SK-N-SH (cell line): ENCODE measurements at regions of chr11 and their contacts with region 1.

Region 1: GRCh38 chr11:57800444-57801182 is 39.0 kb downstream of the CTNND1 start:
- DNase-seq: peak; percentile 77
- H3K4me3 ChIP-seq: no peak overlapping the region; a peak in 1 of 4 replicates
- H3K27ac ChIP-seq: peak overlapping the region; percentile 48 to 63; a peak in 3 of 4 replicates
- H3K4me1 ChIP-seq: peaks cover 17 to 26% of the 10 kb centered on the region in 2 experiments
- H3K27me3 ChIP-seq: no peaks in the 10 kb centered on the region
- CTCF ChIP-seq: peak; percentile 87
- EP300 ChIP-seq: no peak
- RAD21 ChIP-seq: peak; percentile 96

Region 2: DNA sequence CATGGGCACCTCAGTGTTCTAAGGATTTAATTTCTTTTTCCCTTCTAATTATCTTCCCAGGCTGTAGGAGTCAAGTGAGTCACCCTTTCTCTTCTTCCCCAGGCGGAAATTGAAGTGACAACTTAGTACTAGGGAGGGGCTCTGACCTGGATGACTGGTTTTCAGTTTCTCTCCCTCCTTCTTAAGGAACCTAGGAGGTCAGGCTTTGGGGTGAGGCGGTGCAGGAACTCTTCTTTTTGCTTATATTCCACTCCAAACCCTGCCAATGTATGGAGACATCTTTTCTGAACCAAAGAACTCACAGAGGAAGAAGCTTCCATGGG is 120.1 kb before region 1 on chr11:
- CTCF ChIA-PET with region 1: interaction called, 12 read pairs
- POLR2A ChIA-PET with region 1: no interaction called
- DNase-seq: no peak
- H3K4me3 ChIP-seq: no peak overlapping the region
- H3K27ac ChIP-seq: no peak overlapping the region
- H3K4me1 ChIP-seq: no peaks in the 10 kb centered on the region; a peak in 1 of 4 replicates
- H3K27me3 ChIP-seq: no peaks in the 10 kb centered on the region
- CTCF ChIP-seq: no peak
- EP300 ChIP-seq: no peak
- RAD21 ChIP-seq: no peak

Region 3: GRCh38 chr11:57741132-57742086 is 59.2 kb before region 1 on chr11 and contains the start of gene SELENOH:
- CTCF ChIA-PET with region 1: interaction called, 142 read pairs
- POLR2A ChIA-PET with region 1: interaction called, 9 read pairs
- DNase-seq: peak; percentile 94
- H3K4me3 ChIP-seq: peak within 1 kb of the TSS; percentile 90 to 98
- H3K27ac ChIP-seq: peak within 1 kb of the TSS; percentile 85 to 88
- H3K4me1 ChIP-seq: peaks cover 0 to 7% of the 10 kb centered on the region in 2 experiments; a peak in 3 of 4 replicates
- H3K27me3 ChIP-seq: no peaks in the 10 kb centered on the region
- CTCF ChIP-seq: no peak
- EP300 ChIP-seq: peak in 1 of 2 experiments; percentile 48; a peak in 2 of 4 replicates
- RAD21 ChIP-seq: no peak
- polyA plus RNA-seq, gene SELENOH: 291 and 333 TPM in 2 replicates

Region 4: GRCh38 chr11:57761301-57762234 is 39.0 kb before region 1 on chr11 and contains the start of gene CTNND1:
- CTCF ChIA-PET with region 1: interaction called, 116 read pairs
- POLR2A ChIA-PET with region 1: interaction called, 4 read pairs
- DNase-seq: peak; percentile 91
- H3K4me3 ChIP-seq: peak within 1 kb of the TSS; percentile 63 to 73
- H3K27ac ChIP-seq: peak within 1 kb of the TSS; percentile 96 to 97
- H3K4me1 ChIP-seq: peaks cover 5 to 17% of the 10 kb centered on the region in 2 experiments; a peak in 3 of 4 replicates
- H3K27me3 ChIP-seq: no peaks in the 10 kb centered on the region
- CTCF ChIP-seq: no peak
- EP300 ChIP-seq: no peak
- RAD21 ChIP-seq: no peak
- polyA plus RNA-seq, gene CTNND1: 39.4 and 49.4 TPM in 2 replicates

Region 5: DNA sequence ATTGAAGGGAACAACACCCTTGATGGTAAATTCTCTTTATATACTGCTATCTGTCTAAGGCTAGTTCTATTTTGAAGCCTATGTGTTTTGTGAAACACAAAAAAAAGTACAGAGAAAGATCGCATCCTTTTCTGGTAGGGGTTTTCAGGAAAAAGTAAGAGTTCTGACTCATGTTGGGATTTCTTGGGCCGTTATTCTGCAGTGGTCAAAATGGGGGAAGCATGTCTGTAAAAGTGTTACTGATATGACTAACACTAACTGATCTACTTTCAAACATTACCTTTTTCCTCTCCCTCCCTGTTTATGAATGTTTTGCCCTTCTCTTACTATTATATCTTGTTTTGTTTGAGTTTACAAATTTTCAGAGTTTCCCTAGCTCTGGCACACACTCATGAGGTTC is 14.9 kb after region 1 on chr11:
- CTCF ChIA-PET with region 1: interaction called, 18 read pairs
- POLR2A ChIA-PET with region 1: no interaction called
- DNase-seq: no peak
- H3K4me3 ChIP-seq: no peak overlapping the region
- H3K27ac ChIP-seq: no peak overlapping the region
- H3K4me1 ChIP-seq: no peaks in the 10 kb centered on the region
- H3K27me3 ChIP-seq: no peaks in the 10 kb centered on the region
- CTCF ChIP-seq: no peak
- EP300 ChIP-seq: no peak
- RAD21 ChIP-seq: no peak